ENCODE measurements at regions of chr12 and their contacts with region 1.

Region 1: DNA sequence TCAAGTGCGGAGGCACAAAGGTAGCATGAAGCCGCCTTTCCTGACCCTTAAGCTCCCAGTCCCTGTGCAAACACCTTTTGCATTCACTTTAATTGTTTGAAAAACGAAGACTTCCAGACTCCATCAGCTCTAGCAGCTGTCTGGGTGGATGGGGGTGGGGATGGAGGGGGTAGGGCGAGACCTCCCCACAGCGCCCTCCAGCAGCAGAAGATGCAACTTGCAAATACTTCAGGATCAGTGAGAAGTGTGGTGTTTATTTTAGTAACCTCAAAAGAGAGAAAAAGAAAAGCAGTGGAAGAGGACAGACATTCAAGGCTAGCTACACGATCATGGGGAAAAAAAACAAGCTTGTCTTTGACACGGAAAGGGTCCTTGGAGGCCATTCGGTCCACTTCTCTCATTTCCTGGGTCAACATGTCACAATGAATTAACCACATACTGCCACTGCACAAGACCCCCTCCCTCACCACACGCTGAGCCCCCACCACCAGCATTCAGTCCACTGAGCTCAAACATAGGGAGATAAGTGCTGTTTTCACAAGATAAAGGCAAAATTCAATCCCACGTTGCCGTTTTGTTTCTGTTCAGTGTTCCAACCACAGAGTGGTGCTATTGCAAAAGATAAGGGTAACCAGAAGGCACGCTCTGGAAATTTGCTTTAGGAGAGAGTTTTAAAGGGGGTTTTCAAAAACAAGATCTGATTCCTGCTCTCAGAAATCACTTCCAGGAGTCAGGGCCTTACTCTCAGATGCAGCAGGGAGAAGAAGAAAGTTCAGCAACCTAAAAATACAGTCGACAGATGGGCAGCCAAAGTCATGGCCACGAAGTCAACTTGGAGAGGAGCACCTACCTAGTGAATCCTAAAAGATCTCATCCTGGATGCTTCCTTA is 3.3 kb upstream of the NTF3 start:
- DNase-seq: no peak
- H3K4me3 ChIP-seq: no peak overlapping the region
- H3K27ac ChIP-seq: peak overlapping the region; percentile 88 to 92
- H3K4me1 ChIP-seq: peaks cover 0 to 11% of the 10 kb centered on the region in 2 donors
- H3K27me3 ChIP-seq: no peaks in the 10 kb centered on the region
- CTCF ChIP-seq: peak; percentile 60 to 74 (median 61)

Region 2: DNA sequence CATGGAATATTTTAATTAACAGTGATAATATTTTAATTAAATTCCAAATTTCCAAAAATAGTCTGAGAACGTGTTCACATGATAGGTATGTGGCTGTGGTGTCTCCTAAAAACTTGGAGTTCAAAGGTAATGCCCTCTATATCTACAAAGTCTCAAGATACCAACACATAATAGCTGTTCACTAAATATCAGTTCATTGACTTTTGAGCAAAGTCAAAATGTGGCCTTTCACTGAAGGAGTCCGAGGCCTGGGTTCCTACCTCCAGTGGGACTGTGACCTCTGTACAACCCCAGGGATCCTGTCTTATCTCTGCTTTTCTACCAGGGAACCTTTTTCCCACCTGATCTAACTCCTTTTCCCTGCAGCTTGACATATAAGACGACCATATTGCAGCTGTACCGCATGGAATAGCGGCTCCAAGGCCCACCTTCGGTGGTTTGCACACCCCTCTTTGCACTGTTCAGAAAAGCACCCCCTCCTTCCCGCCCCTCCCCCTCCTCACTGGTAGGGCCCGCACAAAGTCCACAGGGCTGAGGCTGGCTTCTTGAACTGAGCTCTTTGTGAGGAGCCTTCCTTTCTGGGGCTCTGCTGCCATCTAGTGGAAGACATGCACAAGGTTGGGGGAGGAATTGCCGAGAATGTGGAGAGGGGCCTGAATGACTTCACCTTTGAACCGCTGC is 1151.9 kb before region 1 on chr12:
- intact Hi-C with region 1: loop called (anchors 5 kb)
- DNase-seq: peak; percentile 63 to 95
- H3K4me3 ChIP-seq: peak overlapping the region; percentile 78 to 87
- H3K27ac ChIP-seq: peak overlapping the region; percentile 92 to 96
- H3K4me1 ChIP-seq: peaks cover 12 to 50% of the 10 kb centered on the region in 2 donors
- H3K27me3 ChIP-seq: no peaks in the 10 kb centered on the region
- CTCF ChIP-seq: peak; percentile 90 to 96 (median 92)

Region 3: DNA sequence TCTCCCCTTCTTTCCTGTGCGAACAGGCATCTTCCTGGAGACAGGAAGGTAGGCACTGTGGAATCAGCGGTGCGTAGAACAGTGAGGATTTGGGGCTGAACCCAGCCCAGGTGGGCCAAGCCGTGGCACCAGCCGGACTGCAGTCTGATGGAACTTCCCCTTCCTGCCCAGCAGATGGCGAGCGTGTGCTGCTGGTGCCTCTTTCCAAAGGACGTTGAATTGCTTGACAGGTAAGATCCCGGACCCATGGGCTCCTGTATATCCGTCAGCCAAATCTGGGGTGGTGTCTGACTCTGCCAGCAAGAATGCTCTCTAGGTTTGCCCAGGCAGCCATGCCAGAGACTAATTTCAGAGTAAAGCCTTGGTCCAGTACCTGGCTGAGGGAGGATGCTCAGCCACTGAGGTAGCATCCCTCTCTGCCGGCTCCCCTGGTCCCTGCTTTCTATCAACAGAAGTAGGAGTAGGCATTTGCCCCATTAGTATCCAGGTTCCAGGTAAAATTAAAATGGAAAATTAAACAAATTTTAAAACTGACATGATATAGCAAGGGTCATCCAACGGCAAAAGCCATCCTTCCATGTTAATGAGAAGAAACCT is 406.0 kb before region 1 on chr12:
- intact Hi-C with region 1: loop called (anchors 5 kb)
- DNase-seq: no peak
- H3K4me3 ChIP-seq: no peak overlapping the region
- H3K27ac ChIP-seq: no peak overlapping the region
- H3K4me1 ChIP-seq: peaks cover 0 to 10% of the 10 kb centered on the region in 2 donors
- H3K27me3 ChIP-seq: no peaks in the 10 kb centered on the region
- CTCF ChIP-seq: peak; percentile 89 to 95 (median 92)

Region 4: DNA sequence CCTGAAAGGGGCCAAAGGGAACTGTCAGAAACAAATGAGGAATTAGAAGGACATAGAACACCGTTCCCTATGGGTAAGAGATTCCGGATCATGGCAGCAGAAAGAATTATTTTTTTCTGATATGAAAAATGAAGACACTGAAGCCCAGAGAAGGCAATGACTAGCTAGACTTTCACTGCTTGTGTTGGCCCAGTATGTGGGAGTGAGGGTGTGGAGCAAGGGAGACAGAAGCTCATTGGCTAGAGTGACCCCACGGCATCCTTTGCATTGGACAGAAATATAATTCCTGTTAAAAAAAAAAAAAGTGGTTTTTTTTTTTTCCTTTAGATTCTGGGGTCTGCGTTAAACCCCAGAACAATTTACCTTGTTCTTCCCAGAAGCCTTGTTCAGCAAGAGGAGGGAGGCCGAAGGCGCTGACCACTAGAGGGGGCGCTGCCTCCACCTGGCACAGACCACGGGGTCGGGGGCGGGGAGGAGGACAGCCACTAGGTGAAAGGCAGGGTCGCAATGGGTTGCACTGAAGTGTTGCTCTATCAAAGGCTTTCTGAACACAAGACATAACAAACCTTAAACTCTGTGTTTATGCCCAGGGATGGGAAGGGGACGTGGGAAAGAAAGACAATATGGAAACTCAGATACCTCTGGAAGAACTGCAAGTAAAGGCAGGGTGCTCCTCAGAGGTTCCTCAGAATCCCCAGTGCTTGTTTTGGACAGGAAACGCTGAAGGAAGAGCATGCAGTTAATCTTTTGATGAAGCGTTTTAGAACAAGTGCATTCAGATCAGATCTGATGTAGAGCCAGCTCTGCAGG is 228.1 kb before region 1 on chr12:
- intact Hi-C with region 1: loop called (anchors 2 kb)
- DNase-seq: no peak
- H3K4me3 ChIP-seq: no peak overlapping the region
- H3K27ac ChIP-seq: no peak overlapping the region
- H3K4me1 ChIP-seq: no peaks in the 10 kb centered on the region
- H3K27me3 ChIP-seq: no peaks in the 10 kb centered on the region
- CTCF ChIP-seq: peak; percentile 28 to 65 (median 41)

Region 5: GRCh38 chr12:5488626-5488955 is 60.0 kb after region 1 on chr12:
- intact Hi-C with region 1: loop called (anchors 1 kb)
- DNase-seq: no peak
- H3K4me3 ChIP-seq: no peak overlapping the region
- H3K27ac ChIP-seq: peak overlapping the region; percentile 82 to 93
- H3K4me1 ChIP-seq: peaks cover 11 to 58% of the 10 kb centered on the region in 2 donors
- H3K27me3 ChIP-seq: no peaks in the 10 kb centered on the region
- CTCF ChIP-seq: no peak

Region 6: GRCh38 chr12:5614256-5614655 is 185.7 kb after region 1 on chr12:
- intact Hi-C with region 1: no loop called
- DNase-seq: no peak
- H3K4me3 ChIP-seq: no peak overlapping the region
- H3K27ac ChIP-seq: no peak overlapping the region
- H3K4me1 ChIP-seq: no peaks in the 10 kb centered on the region
- H3K27me3 ChIP-seq: no peaks in the 10 kb centered on the region
- CTCF ChIP-seq: no peak

Region 7: DNA sequence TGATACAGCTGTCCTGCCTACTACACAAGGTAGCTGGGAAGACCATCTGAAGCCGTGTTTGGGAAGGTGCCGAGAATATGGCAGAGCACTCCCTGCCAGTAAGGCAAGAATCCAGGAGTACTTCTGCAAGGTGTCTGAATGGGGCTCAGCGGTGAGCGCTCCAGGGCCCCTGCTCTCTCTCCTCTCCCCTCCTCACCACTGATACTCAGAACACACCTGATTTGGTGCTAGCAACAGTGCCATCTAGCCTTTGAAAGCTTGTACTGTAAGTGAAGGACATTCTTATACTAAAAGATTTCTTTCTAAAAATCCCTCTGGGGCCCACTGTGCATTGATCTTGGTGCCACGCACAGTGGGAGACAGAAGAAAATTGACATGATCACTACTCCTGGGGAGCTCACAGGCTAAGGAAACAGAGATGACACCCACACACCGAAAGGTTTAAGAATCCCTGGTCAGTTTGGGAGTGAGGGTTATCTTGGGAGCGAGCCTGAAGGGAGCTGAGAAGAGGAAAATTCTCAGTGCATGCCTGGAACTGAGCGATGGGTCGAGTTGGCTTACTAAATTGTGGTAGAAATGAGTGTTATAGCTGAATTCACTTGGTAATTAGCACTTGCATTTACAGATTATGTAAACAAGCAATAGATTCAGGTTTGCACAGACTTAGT is 220.2 kb after region 1 on chr12:
- intact Hi-C with region 1: loop called (anchors 2 kb)
- DNase-seq: no peak
- H3K4me3 ChIP-seq: no peak overlapping the region
- H3K27ac ChIP-seq: no peak overlapping the region
- H3K4me1 ChIP-seq: peaks cover 0 to 2% of the 10 kb centered on the region in 2 donors
- H3K27me3 ChIP-seq: no peaks in the 10 kb centered on the region
- CTCF ChIP-seq: peak in 2 of 3 experiments; percentile 32 to 55

Region 8: GRCh38 chr12:5796171-5796958 is 367.8 kb after region 1 on chr12:
- intact Hi-C with region 1: loop called (anchors 2 kb)
- DNase-seq: no peak
- H3K4me3 ChIP-seq: no peak overlapping the region
- H3K27ac ChIP-seq: no peak overlapping the region
- H3K4me1 ChIP-seq: no peaks in the 10 kb centered on the region
- H3K27me3 ChIP-seq: no peaks in the 10 kb centered on the region
- CTCF ChIP-seq: peak; percentile 33 to 56 (median 49)